Sciatic nerve (tissue), 2 donors: ENCODE measurements at regions of chr1 and their contacts with region 1.

Region 1: GRCh38 chr1:19925342-19926070 is 2.1 kb upstream of the PLA2G2E start:
- DNase-seq: no peak
- ATAC-seq: no peak

Region 2: DNA sequence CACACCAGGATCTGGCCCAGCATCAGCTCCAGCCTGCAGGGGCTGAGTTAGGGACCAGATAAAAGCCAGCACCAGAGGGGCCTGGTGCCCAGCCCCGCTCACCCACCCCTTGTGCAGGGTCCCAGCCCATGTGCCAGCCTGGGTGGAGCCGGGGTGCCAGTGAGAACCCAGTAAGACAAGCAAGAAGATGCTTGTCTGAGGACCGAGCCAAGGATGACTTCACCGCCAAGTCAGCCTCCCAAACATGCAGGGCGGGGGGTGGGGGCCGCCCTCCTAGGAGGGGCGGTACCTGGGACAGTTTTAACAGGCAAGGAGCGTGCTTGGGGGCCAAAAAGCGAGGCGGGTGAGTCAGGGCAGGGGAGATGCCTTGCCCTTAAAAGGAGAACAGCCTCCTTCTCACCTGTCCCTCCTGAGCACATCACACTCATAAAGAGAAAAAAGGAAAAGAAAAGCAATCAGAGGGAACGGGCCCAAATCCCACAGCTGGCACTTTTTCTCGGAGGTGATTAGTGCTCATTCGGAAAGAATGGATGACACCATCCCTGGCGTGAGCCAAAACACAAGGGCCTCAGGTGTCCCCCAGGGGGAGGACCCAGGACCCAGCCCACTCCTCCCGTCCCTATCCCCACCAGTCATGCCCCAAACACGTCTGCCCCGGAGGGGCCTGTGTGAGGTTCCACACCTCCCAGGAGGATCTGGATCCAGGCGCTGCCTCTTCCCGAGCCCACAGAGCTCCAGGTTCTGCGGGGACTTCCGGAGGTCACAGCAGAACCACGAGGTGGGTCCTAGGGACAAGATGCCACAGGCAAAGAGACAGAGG is 891.4 kb before region 1 on chr1:
- intact Hi-C with region 1: no loop called
- DNase-seq: no peak
- ATAC-seq: no peak

Region 3: GRCh38 chr1:20151906-20152598 is 226.5 kb after region 1 on chr1:
- intact Hi-C with region 1: loop called (anchors 2 kb)
- DNase-seq: peak; percentile 91
- ATAC-seq: peak; percentile 92